ENCODE measurements at regions of chr9 and their contacts with region 1.

Region 1: GRCh38 chr9:104009826-104010225 is 84.3 kb upstream of the SMC2 start:
- DNase-seq: no peak
- ATAC-seq: no peak
- H3K4me3 ChIP-seq: no peak overlapping the region
- H3K4me3 Mint-ChIP-seq: no peak overlapping the region
- H3K27ac ChIP-seq: no peak overlapping the region
- H3K27ac Mint-ChIP-seq: no peak overlapping the region
- H3K4me1 ChIP-seq: no peaks in the 10 kb centered on the region
- H3K4me1 Mint-ChIP-seq: no peaks in the 10 kb centered on the region
- H3K27me3 ChIP-seq: no peaks in the 10 kb centered on the region
- H3K27me3 Mint-ChIP-seq: peaks cover 0 to 2% of the 10 kb centered on the region in 2 donors
- CTCF ChIP-seq: no peak

Region 2: GRCh38 chr9:103661663-103662062 is 348.2 kb before region 1 on chr9:
- intact Hi-C with region 1: no loop called
- DNase-seq: no peak
- ATAC-seq: no peak
- H3K4me3 ChIP-seq: no peak overlapping the region
- H3K4me3 Mint-ChIP-seq: no peak overlapping the region
- H3K27ac ChIP-seq: no peak overlapping the region
- H3K27ac Mint-ChIP-seq: no peak overlapping the region
- H3K4me1 ChIP-seq: no peaks in the 10 kb centered on the region
- H3K4me1 Mint-ChIP-seq: no peaks in the 10 kb centered on the region
- H3K27me3 ChIP-seq: no peaks in the 10 kb centered on the region
- H3K27me3 Mint-ChIP-seq: no peaks in the 10 kb centered on the region
- CTCF ChIP-seq: no peak

Region 3: GRCh38 chr9:104028827-104029226 is 19.0 kb after region 1 on chr9:
- intact Hi-C with region 1: loop called (anchors 1 kb)
- DNase-seq: no peak
- ATAC-seq: no peak
- H3K4me3 ChIP-seq: no peak overlapping the region
- H3K4me3 Mint-ChIP-seq: no peak overlapping the region
- H3K27ac ChIP-seq: no peak overlapping the region
- H3K27ac Mint-ChIP-seq: no peak overlapping the region
- H3K4me1 ChIP-seq: no peaks in the 10 kb centered on the region
- H3K4me1 Mint-ChIP-seq: peaks cover 0 to 21% of the 10 kb centered on the region in 2 donors
- H3K27me3 ChIP-seq: no peaks in the 10 kb centered on the region
- H3K27me3 Mint-ChIP-seq: no peaks in the 10 kb centered on the region
- CTCF ChIP-seq: no peak

Region 4: DNA sequence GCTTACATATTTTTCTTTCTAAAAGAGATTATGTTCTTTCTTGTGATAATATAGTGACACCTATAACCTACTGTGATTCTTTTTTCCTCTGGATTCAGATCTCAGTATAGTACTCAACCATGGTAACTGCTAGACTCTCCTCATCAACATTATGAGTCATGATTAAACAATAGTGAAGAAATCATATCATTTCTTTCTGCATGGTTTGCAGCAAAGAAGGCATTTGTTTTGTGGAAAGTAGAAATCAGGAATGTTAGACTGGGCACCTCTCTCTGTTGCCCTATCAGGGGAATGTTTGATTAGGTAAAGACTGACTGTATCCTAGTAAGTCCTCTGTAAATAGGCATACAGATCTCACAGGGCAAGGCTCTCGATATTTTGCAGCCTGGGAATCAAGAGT is 58.7 kb after region 1 on chr9:
- intact Hi-C with region 1: no loop called
- DNase-seq: no peak
- ATAC-seq: no peak
- H3K4me3 ChIP-seq: no peak overlapping the region
- H3K4me3 Mint-ChIP-seq: no peak overlapping the region
- H3K27ac ChIP-seq: no peak overlapping the region
- H3K27ac Mint-ChIP-seq: no peak overlapping the region
- H3K4me1 ChIP-seq: no peaks in the 10 kb centered on the region
- H3K4me1 Mint-ChIP-seq: no peaks in the 10 kb centered on the region
- H3K27me3 ChIP-seq: no peaks in the 10 kb centered on the region
- H3K27me3 Mint-ChIP-seq: peaks cover 0 to 2% of the 10 kb centered on the region in 2 donors
- CTCF ChIP-seq: no peak